Activated CD8-positive, alpha-beta T cell treated with anti-CD3 and anti-CD28 coated beads, Interleukin-2, amount 10 ng/mL, durations not matched to agents 7 days and 5 days (primary cell): ENCODE measurements at regions of chr20 and their contacts with region 1.

Region 1: GRCh38 chr20:32894026-32894483 is 35.3 kb downstream of the EFCAB8 start:
- DNase-seq: no peak
- ATAC-seq: no peak
- H3K4me3 Mint-ChIP-seq: no peak overlapping the region
- H3K27ac Mint-ChIP-seq: no peak overlapping the region
- H3K4me1 Mint-ChIP-seq: peaks cover 11% of the 10 kb centered on the region
- H3K27me3 Mint-ChIP-seq: no peaks in the 10 kb centered on the region

Region 2: DNA sequence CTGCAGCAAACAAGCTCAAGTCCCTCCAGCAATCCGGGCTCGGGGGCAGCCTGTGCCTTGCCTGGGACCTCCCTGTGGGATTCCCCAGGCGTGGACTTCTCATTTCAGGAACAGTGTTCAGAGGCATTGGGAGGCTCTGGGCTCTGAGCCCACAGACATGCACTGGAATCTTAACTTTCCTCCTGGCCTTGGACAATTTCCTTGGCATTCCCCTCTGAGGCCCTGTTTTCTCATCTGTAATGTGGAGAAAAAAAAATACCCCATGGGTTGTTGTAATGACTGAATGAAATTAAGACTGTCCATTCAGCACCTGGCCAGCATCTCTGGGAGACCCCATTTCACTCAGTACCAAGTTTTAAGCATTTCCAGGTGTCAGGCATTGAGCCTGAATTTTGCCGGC is 202.9 kb after region 1 on chr20:
- CTCF ChIA-PET with region 1: interaction called, 14 read pairs
- POLR2A ChIA-PET with region 1: no interaction called
- DNase-seq: no peak
- ATAC-seq: no peak
- H3K4me3 Mint-ChIP-seq: no peak overlapping the region
- H3K27ac Mint-ChIP-seq: no peak overlapping the region
- H3K4me1 Mint-ChIP-seq: no peaks in the 10 kb centered on the region
- H3K27me3 Mint-ChIP-seq: peaks cover 3% of the 10 kb centered on the region